PC-9 (cell line): ENCODE measurements at regions of chr1 and their contacts with region 1.

Region 1: GRCh38 chr1:66563094-66563800 is 29.3 kb downstream of the SGIP1 start:
- DNase-seq: peak; percentile 27 to 76
- H3K4me3 ChIP-seq: peak overlapping the region; percentile 47; the same call in 1 of the 2 replicates
- H3K27ac ChIP-seq: peak overlapping the region; percentile 89
- H3K4me1 ChIP-seq: peaks cover 37% of the 10 kb centered on the region
- H3K27me3 ChIP-seq: no peaks in the 10 kb centered on the region
- CTCF ChIP-seq: no peak

Region 2: DNA sequence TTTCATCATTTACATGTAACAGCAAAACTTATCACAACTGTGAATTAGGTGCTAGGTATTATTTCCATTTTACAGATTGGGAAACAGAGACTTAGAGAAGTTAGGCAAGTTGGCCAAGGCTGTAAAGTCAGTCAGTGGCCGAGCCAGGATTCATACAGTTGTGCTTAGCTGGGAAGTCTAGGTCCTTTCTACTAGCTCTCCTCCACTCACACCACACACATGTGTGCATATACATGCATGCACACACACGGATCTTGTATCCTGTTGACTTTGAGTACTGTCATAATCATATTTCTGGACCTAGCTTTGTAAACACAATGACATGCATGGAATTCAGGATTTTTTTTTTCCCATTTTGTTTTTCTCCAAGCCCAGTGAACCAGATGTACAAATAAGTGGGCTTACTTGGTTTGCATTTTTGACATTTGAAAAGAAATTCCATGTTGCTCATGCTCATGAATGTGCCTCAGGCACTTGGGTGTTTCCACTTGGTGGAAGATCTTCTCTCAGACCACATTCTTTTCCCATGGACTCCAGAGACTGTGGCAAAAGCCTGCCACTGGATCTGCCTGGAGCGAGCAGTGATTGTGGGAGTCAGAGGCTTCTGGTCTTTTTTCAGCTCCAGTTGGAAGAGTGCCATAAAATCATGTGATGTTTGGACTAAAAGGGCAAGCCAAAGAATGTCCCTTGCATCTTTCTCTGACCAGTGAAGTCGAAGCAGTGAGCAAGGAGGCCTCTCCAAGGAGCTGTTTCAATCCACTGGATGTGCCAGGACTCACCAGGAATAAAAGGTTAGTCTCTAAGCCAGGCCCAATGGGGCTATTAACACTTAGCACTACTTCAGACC is 1315.5 kb before region 1 on chr1:
- CTCF ChIA-PET with region 1: no interaction called
- POLR2A ChIA-PET with region 1: no interaction called
- intact Hi-C with region 1: loop called (anchors 5 kb)
- DNase-seq: peak; percentile 90 to 97
- H3K4me3 ChIP-seq: no peak overlapping the region; the same call in 1 of the 2 replicates
- H3K27ac ChIP-seq: peak overlapping the region; percentile 85
- H3K4me1 ChIP-seq: peaks cover 19% of the 10 kb centered on the region
- H3K27me3 ChIP-seq: no peaks in the 10 kb centered on the region
- CTCF ChIP-seq: no peak

Region 3: GRCh38 chr1:66262211-66262963 is 300.9 kb before region 1 on chr1:
- CTCF ChIA-PET with region 1: no interaction called
- POLR2A ChIA-PET with region 1: no interaction called
- intact Hi-C with region 1: loop called (anchors 5 kb)
- DNase-seq: peak; percentile 52 to 85
- H3K4me3 ChIP-seq: no peak overlapping the region
- H3K27ac ChIP-seq: no peak overlapping the region
- H3K4me1 ChIP-seq: 0 out of 2 replicates have a peak, but pooled peaks cover 6% of the 10 kb centered on the region
- H3K27me3 ChIP-seq: no peaks in the 10 kb centered on the region
- CTCF ChIP-seq: no peak

Region 4: GRCh38 chr1:66542811-66543767 is 20.2 kb before region 1 on chr1:
- CTCF ChIA-PET with region 1: no interaction called
- POLR2A ChIA-PET with region 1: interaction called, 3 read pairs
- intact Hi-C with region 1: loop called (anchors 1 kb)
- DNase-seq: peak; percentile 72 to 84
- H3K4me3 ChIP-seq: no peak overlapping the region
- H3K27ac ChIP-seq: peak overlapping the region; percentile 69
- H3K4me1 ChIP-seq: peaks cover 21% of the 10 kb centered on the region
- H3K27me3 ChIP-seq: no peaks in the 10 kb centered on the region
- CTCF ChIP-seq: no peak

Region 5: DNA sequence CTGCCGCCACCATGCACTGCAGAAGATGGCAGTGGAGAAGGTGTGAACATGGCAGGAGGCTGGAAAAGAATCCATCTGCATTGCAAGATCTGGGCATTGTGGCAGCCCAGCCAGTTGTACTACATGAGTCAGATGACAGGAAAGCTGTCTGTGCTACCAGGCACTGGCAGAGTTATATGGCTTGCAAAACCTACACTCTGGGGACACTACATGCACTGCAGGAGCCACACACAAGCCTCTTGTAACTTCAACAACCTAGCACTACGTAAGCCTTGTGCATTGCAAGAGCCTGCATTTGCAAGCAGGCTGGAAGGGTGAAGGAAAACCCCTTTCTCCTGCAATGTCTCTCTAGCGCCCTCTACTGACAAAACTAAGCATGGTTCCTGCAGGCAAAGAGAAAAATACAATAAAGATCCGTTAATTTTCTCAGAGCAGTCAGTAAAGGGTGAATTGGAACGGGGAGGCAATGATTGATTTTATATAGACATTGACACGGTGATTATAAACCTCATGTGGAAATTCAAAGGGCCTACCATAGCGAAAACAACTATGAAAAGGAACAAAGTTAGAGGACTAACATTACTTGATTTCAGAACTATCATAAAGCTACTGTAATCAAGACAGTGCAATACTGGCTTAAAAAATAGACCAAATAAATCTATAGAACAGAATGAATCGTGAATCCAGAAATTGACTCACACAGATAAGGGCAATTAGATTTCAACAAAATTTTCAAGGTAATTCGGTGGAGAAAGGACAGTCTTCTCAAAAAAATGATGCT is 162.8 kb after region 1 on chr1:
- CTCF ChIA-PET with region 1: no interaction called
- POLR2A ChIA-PET with region 1: no interaction called
- intact Hi-C with region 1: loop called (anchors 5 kb)
- DNase-seq: peak; percentile 41 to 42
- H3K4me3 ChIP-seq: no peak overlapping the region
- H3K27ac ChIP-seq: no peak overlapping the region
- H3K4me1 ChIP-seq: no peaks in the 10 kb centered on the region
- H3K27me3 ChIP-seq: no peaks in the 10 kb centered on the region
- CTCF ChIP-seq: peak; percentile 96

Region 6: DNA sequence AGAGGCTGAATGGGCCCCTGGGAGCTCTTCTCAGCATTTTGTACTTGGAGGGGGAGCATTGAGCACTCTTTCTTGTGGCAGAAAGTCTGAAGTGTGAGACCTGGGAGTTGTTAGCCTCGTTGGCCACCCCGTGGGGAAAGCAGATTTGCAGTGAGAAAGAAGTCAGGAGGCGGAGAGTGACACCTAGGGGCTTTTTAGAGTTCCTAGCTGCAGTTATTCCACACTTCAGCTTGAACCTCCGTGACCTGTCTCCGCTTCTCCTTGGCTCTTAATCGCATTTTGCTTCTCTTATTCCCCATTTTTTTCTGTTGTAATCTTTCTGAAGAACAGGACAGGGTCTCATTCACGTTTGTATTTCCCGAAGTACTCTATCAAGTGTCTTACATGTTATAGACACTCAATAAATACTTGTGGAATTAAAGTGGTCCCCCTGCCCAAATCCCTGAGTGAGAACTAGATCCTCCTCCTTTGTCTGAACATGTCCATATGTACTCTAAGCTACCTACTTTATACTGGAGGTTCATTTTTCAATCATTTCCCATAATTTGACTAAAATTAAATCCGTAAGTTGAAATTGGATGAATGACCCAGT is 586.0 kb after region 1 on chr1:
- CTCF ChIA-PET with region 1: interaction called, 12 read pairs
- POLR2A ChIA-PET with region 1: no interaction called
- intact Hi-C with region 1: no loop called
- DNase-seq: peak; percentile 40 to 45
- H3K4me3 ChIP-seq: no peak overlapping the region
- H3K27ac ChIP-seq: no peak overlapping the region
- H3K4me1 ChIP-seq: no peaks in the 10 kb centered on the region
- H3K27me3 ChIP-seq: no peaks in the 10 kb centered on the region
- CTCF ChIP-seq: peak; percentile 60